HepG2 (cell line): ENCODE measurements at regions of chr10 and their contacts with region 1.

Region 1: DNA sequence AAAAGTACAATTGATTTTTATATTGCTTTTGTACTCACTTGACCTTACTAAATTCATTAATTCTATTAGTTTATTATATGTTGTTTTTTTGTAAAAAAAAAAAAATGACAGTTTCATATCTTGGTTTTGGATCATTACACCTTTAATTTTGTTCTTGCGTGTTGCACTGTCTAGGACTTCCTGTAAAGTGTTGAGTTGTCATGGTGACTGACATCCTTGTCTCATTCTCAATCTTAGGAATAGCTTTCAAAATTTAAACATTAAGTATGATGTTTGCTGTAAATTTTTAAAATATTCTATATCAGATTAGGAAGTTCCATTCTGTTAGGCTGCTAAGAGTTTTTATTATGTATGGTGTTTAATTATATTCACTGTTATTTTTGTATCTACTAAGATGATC is 139.1 kb downstream of the ARHGAP12 start:
- DNase-seq: no peak
- ATAC-seq: no peak
- H3K4me3 ChIP-seq: no peak overlapping the region
- H3K27ac ChIP-seq: no peak overlapping the region
- H3K4me1 ChIP-seq: no peaks in the 10 kb centered on the region
- H3K27me3 ChIP-seq: no peaks in the 10 kb centered on the region
- CTCF ChIP-seq: no peak
- EP300 ChIP-seq: no peak
- POLR2A ChIP-seq: no peak
- RAD21 ChIP-seq: no peak

Region 2: GRCh38 chr10:31669357-31669756 is 120.2 kb before region 1 on chr10:
- CTCF ChIA-PET with region 1: no interaction called
- POLR2A ChIA-PET with region 1: no interaction called
- in situ Hi-C with region 1: no loop called
- intact Hi-C with region 1: no loop called
- DNase-seq: no peak
- ATAC-seq: no peak
- H3K4me3 ChIP-seq: no peak overlapping the region
- H3K27ac ChIP-seq: no peak overlapping the region
- H3K4me1 ChIP-seq: no peaks in the 10 kb centered on the region
- H3K27me3 ChIP-seq: 0 out of 5 replicates have a peak, but pooled peaks cover 0 to 3% of the 10 kb centered on the region in 2 experiments
- CTCF ChIP-seq: no peak
- EP300 ChIP-seq: no peak
- POLR2A ChIP-seq: no peak
- RAD21 ChIP-seq: no peak

Region 3: DNA sequence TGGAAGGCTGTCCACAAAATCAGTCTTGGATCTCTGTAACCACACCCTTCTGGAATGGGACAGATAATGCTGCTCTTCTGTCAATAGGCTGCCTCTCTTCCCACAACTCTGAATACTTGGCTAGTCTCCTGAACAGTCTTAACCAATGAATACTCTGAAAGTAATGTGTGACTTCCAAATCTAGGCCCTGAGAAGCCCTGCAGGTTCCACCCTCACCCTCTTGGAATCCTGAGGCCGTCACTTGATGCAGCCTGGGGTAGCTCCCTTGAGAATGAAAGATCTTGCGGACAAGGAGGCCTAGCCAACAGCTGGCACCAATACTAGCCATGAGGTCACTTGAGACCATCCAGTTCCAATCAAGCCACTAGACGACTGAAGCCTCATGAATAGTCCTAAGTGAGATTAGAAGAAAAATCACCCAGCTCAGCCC is 29.8 kb after region 1 on chr10:
- CTCF ChIA-PET with region 1: no interaction called
- POLR2A ChIA-PET with region 1: no interaction called
- in situ Hi-C with region 1: no loop called
- intact Hi-C with region 1: loop called (anchors 1 kb)
- DNase-seq: no peak
- ATAC-seq: no peak; the same call in 2 of the 3 replicates
- H3K4me3 ChIP-seq: no peak overlapping the region
- H3K27ac ChIP-seq: no peak overlapping the region
- H3K4me1 ChIP-seq: no peaks in the 10 kb centered on the region
- H3K27me3 ChIP-seq: no peaks in the 10 kb centered on the region
- CTCF ChIP-seq: no peak
- EP300 ChIP-seq: no peak
- POLR2A ChIP-seq: no peak
- RAD21 ChIP-seq: no peak